Endothelial cell of umbilical vein (primary cell): ENCODE measurements at regions of chr11 and their contacts with region 1.

Region 1: GRCh38 chr11:128831174-128832120 is 35.6 kb downstream of the KCNJ1 start:
- DNase-seq: peak; percentile 87
- H3K4me3 ChIP-seq: no peak overlapping the region
- H3K27ac ChIP-seq: peak overlapping the region; percentile 47
- H3K4me1 ChIP-seq: peaks cover 65% of the 10 kb centered on the region
- H3K27me3 ChIP-seq: no peaks in the 10 kb centered on the region
- CTCF ChIP-seq: peak; percentile 81 to 84
- POLR2A ChIP-seq: no peak

Region 2: GRCh38 chr11:128180446-128181087 is 650.9 kb before region 1 on chr11:
- CTCF ChIA-PET with region 1: interaction called, 8 read pairs
- POLR2A ChIA-PET with region 1: no interaction called
- dilution Hi-C with region 1: no loop called
- intact Hi-C with region 1: loop called (anchors 1 kb)
- DNase-seq: peak; percentile 93
- H3K4me3 ChIP-seq: no peak overlapping the region
- H3K27ac ChIP-seq: peak overlapping the region; percentile 97
- H3K4me1 ChIP-seq: peaks cover 19% of the 10 kb centered on the region
- H3K27me3 ChIP-seq: no peaks in the 10 kb centered on the region
- CTCF ChIP-seq: no peak
- POLR2A ChIP-seq: no peak

Region 3: DNA sequence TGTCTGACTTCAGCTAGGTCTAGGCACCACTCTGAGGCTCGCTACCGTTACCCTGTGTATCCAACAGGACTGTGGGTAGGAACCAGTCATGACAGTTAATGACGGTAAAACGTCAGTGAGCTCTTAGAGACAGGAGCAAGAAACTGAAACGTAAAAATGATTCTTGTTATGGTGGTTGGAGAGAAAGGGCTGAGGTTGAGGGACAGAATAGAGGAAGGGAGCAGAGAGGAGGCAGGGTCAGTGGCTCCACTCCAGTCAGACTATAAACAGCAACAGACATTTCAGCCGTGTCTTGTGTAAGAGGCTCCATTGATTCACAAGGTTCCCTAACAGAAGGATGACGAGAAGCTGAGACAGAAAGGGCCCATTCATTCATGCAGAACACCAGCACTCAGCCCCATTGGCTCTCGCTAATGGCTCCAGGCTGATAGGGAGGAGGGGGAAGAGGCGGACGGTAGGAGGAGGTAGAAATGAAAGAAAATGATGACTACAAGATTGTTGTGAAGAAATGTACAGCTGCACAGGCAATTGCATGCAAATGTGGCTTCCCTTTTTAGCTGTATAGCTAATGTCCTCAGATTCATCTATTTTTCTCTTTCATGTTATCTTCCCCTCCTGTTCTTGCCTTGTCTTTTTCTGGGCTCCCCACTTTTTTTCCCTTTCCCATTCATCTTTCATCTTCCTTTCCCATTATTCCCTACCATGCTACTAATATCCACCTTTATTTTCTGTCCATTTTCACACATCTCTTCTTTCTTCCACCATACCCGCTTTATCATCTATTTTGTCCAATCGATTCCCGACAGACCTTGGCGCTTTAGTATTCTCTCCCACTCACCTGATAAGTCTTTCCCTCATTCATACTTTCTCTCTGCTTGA is 278.4 kb before region 1 on chr11:
- CTCF ChIA-PET with region 1: interaction called, 3 read pairs
- POLR2A ChIA-PET with region 1: no interaction called
- dilution Hi-C with region 1: no loop called
- intact Hi-C with region 1: loop called (anchors 1 kb)
- DNase-seq: no peak
- H3K4me3 ChIP-seq: no peak overlapping the region
- H3K27ac ChIP-seq: no peak overlapping the region
- H3K4me1 ChIP-seq: peaks cover 11% of the 10 kb centered on the region
- H3K27me3 ChIP-seq: peaks cover 4 to 6% of the 10 kb centered on the region in 2 experiments
- CTCF ChIP-seq: no peak
- POLR2A ChIP-seq: no peak

Region 4: DNA sequence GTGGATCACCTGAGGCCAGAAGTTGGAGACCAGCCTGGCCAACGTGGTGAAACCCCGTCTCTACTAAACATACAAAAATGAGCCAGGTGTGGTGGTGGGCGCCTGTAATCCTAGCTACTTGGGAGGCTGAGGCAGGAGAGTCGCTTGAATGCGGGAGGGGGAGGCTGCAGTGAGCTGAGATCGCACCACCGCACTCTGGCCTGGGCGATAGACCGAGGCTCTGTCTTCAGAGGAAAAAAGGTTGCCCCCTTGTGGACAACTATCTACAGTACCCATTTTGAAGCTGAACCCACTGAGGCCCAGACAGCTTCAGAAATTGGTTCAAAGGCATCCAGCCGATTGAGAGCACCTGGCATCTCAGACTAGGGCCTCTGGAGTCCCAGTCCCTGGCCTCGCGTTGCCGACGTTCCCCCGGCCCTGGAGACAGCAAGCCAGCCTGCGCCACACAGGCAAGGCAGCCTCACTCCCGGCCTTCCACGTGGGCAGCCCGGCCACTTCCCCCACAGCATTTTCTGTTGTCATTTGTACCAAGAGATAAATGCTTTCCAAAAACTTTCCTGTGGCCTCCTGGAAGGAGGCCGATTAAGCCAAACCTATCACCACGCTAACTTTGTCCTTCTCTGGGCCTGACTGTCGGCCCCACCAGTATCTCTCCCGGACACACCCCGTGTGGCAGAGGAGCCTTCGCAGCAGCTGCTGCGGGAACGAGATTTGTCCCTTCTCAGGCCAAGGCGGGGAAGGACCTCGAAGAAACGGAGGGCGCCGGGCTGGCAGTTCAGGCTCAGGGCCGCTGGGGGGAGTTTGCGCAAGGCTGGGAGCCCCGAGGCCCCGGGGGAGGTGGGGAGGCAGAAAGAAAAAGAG is 54.8 kb before region 1 on chr11:
- CTCF ChIA-PET with region 1: interaction called, 21 read pairs
- POLR2A ChIA-PET with region 1: interaction called, 3 read pairs
- dilution Hi-C with region 1: no loop called
- intact Hi-C with region 1: loop called (anchors 1 kb)
- DNase-seq: no peak
- H3K4me3 ChIP-seq: no peak overlapping the region
- H3K27ac ChIP-seq: no peak overlapping the region
- H3K4me1 ChIP-seq: peaks cover 27% of the 10 kb centered on the region
- H3K27me3 ChIP-seq: no peaks in the 10 kb centered on the region
- CTCF ChIP-seq: peak; percentile 29 to 39
- POLR2A ChIP-seq: no peak

Region 5: GRCh38 chr11:128809128-128809527 is 22.3 kb before region 1 on chr11:
- CTCF ChIA-PET with region 1: interaction called, 20 read pairs
- POLR2A ChIA-PET with region 1: no interaction called
- dilution Hi-C with region 1: no loop called
- intact Hi-C with region 1: no loop called
- DNase-seq: no peak
- H3K4me3 ChIP-seq: no peak overlapping the region
- H3K27ac ChIP-seq: no peak overlapping the region
- H3K4me1 ChIP-seq: no peaks in the 10 kb centered on the region
- H3K27me3 ChIP-seq: no peaks in the 10 kb centered on the region
- CTCF ChIP-seq: no peak
- POLR2A ChIP-seq: no peak